ENCODE measurements at regions of chr5 and their contacts with region 1.

Region 1: DNA sequence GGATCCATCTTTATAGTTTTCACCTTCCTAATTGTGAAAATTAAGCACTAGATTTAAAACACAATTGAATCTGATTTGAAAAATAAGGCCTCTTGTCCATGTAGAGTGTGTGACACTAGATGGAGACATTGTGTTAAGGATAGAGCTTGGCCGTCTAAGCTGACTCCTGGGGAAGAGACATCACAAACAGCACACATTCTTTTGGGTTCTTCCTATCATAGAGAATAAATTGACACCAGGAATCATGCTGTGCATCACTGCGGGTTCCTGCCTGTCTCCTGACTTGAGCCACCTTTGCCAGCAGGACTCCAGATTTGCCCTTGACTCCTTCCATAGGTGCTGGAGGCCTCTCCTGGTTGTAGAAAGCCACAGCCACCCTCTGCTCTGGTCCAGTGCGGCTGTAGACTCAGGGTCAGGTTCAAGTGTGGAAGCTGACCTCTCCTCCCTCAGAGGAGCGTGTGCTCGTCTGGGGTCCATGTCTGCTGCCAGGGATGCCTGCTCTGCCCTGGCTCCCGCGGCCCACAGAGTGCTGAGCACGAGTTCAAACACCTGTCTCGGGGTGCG is 11.2 kb downstream of the ROPN1L start:
- DNase-seq: peak; percentile 86 to 94 (median 91)
- H3K4me3 ChIP-seq: no peak overlapping the region
- H3K27ac ChIP-seq: no peak overlapping the region
- H3K4me1 ChIP-seq: peaks cover 0 to 32% (median 12%) of the 10 kb centered on the region in 4 experiments
- H3K27me3 ChIP-seq: no peaks in the 10 kb centered on the region

Region 2: GRCh38 chr5:10479226-10479721 is 26.4 kb after region 1 on chr5:
- CTCF ChIA-PET with region 1: interaction called, 24 read pairs
- POLR2A ChIA-PET with region 1: no interaction called
- DNase-seq: no peak
- H3K4me3 ChIP-seq: no peak overlapping the region
- H3K27ac ChIP-seq: no peak overlapping the region
- H3K4me1 ChIP-seq: peaks cover 0 to 11% (median under 1%) of the 10 kb centered on the region in 4 experiments
- H3K27me3 ChIP-seq: no peaks in the 10 kb centered on the region

Region 3: GRCh38 chr5:10590226-10590999 is 137.6 kb after region 1 on chr5:
- CTCF ChIA-PET with region 1: interaction called, 15 read pairs
- POLR2A ChIA-PET with region 1: no interaction called
- DNase-seq: peak in 2 of 3 donors; percentile 45 to 53
- H3K4me3 ChIP-seq: peak overlapping the region in 3 of 7 experiments; percentile 12 to 51 (median 33)
- H3K27ac ChIP-seq: peak overlapping the region in 1 of 2 experiments; percentile 82
- H3K4me1 ChIP-seq: peaks cover 7 to 59% (median 49%) of the 10 kb centered on the region in 4 experiments
- H3K27me3 ChIP-seq: no peaks in the 10 kb centered on the region

Region 4: GRCh38 chr5:10627160-10627701 is 174.4 kb after region 1 on chr5:
- CTCF ChIA-PET with region 1: interaction called, 130 read pairs
- POLR2A ChIA-PET with region 1: interaction called, 3 read pairs
- DNase-seq: no peak
- H3K4me3 ChIP-seq: peak overlapping the region in 6 of 7 experiments; percentile 29 to 76 (median 64)
- H3K27ac ChIP-seq: peak overlapping the region; percentile 59 to 81
- H3K4me1 ChIP-seq: peaks cover 10 to 44% (median 29%) of the 10 kb centered on the region in 4 experiments
- H3K27me3 ChIP-seq: no peaks in the 10 kb centered on the region

Region 5: GRCh38 chr5:10695055-10695649 is 242.3 kb after region 1 on chr5:
- CTCF ChIA-PET with region 1: interaction called, 78 read pairs
- POLR2A ChIA-PET with region 1: no interaction called
- DNase-seq: peak; percentile 54 to 59 (median 54)
- H3K4me3 ChIP-seq: peak overlapping the region in 1 of 7 experiments; percentile 26
- H3K27ac ChIP-seq: no peak overlapping the region
- H3K4me1 ChIP-seq: peaks cover 0 to 9% (median 2%) of the 10 kb centered on the region in 4 experiments
- H3K27me3 ChIP-seq: no peaks in the 10 kb centered on the region

Measured in common myeloid progenitor, CD34-positive (primary cell).